ENCODE measurements at regions of chr1 and their contacts with region 1.

Region 1: DNA sequence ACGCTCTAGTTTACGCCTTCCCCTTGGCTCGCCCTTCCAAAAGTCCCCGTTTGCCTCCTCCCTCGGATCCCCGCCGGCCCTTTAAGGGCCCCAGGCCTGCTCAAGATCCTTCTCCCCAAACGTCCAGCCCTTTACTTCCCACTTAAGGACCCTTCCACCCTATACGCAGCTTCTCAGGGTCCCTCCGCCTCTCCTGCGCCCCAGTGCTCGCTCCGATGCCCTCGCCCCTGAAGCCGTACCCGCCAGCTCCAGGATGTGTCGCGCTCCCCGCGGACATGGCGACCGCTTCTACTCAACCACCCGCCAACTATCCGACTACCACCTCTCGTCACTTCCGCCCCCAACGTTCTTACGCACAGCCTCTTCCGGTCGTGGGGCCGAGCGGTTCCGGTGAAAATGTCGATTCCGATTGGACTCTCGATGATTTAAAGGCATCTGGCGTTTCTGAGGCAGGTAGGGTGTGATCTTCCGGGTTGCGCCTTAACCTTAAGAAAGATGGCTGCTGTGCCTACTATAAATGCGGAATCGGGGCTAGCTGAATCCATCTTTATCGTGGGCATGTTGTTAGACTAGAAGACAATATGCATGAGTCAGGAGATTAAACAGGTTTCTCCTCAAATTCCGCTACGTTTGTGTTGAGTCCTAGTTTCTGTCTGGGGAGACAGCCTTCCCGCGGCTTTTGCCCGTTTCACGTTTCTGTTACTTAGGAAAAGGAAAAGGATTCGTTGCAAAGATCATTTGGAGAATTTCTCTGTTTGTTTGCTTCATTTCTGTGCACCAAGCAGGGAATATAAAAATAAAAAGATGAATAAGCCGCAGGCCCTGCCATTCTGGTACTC is at the start of gene KHDC4:
- DNase-seq: peak; percentile 99
- ATAC-seq: peak; percentile 92
- H3K4me3 ChIP-seq: peak within 1 kb of the TSS; percentile 99
- H3K27ac ChIP-seq: peak within 1 kb of the TSS; percentile 87
- H3K4me1 ChIP-seq: peaks cover 13% of the 10 kb centered on the region
- H3K27me3 ChIP-seq: no peaks in the 10 kb centered on the region
- CTCF ChIP-seq: 0 out of 6 replicates have a peak, but pooled peaks of 1 of the 3 experiments have one; percentile 15
- EP300 ChIP-seq: no peak
- POLR2A ChIP-seq: peak; percentile 100
- RAD21 ChIP-seq: 0 out of 2 replicates have a peak, but pooled peaks have one; percentile 8
- polyA plus RNA-seq, gene KHDC4: 11.7 to 15.1 TPM

Region 2: DNA sequence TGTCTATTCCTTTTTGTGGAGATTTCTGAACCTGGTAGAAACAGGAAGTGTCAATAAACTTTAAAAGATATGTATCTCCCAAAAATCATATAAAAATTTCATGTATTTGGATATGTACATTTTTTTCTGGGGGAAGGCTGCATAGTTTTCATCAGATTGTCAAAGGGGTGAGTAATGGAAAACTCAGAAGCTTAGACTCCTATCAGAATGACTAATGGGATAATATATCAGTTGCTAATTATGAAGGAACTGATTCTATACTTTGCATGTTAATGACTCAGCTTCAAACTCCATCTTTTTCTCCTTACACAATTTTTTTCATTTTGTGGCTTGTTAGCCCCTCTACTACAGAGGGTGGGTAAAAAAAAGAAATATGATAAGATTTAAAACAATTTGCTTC is 133.2 kb before region 1 on chr1:
- CTCF ChIA-PET with region 1: no interaction called
- POLR2A ChIA-PET with region 1: no interaction called
- RAD21 ChIA-PET with region 1: no interaction called
- SMC1A ChIA-PET with region 1: no interaction called
- in situ Hi-C with region 1: no loop called
- intact Hi-C with region 1: no loop called
- DNase-seq: no peak
- ATAC-seq: no peak
- H3K4me3 ChIP-seq: no peak overlapping the region
- H3K27ac ChIP-seq: no peak overlapping the region
- H3K4me1 ChIP-seq: no peaks in the 10 kb centered on the region
- H3K27me3 ChIP-seq: no peaks in the 10 kb centered on the region
- CTCF ChIP-seq: no peak
- EP300 ChIP-seq: no peak
- POLR2A ChIP-seq: no peak
- RAD21 ChIP-seq: no peak

Region 3: DNA sequence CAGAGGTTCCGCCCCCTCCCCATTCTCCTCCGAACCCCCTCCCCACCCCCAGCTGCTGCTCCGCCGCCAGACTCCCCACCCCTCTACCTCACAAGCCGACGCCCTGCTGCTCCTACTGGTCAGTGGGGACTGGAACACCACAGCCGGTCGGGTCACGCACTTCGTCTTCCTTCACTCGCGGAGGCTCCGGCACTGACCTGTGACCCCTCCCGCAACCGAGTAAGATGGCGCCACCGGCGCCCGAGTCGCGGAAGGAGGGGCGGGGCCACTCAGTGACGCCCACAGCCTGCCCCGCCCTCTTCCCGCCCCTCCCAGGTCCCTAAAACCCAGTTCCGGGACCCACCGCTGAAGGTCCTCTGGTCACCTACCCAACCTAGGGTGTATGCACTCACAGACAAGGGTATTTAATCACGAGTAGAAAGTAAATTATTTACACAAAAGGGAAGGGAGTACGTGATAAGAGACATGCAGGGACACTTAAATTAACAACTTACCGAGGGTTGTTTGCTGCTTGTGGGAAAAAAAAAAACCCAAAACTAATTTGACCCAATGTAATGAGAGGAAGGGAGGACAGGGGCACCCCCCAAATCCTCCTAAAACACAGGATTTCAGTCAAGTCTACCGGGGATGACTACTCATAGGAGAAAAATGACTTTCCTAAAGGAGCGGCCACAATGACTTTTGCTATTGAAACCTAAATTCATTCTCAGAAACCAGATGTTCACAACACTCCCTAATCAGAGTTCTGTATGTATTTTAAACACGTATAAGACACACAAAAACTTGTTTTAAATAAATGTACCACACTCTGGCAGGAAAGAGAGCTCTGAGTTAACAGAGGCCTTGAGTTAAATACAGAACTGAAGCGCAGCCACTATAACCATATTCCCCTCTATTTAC is 22.9 kb before region 1 on chr1 and contains the start of gene RIT1:
- CTCF ChIA-PET with region 1: interaction called, 5 read pairs
- POLR2A ChIA-PET with region 1: interaction called, 11 read pairs
- RAD21 ChIA-PET with region 1: interaction called, 4 read pairs
- SMC1A ChIA-PET with region 1: interaction called, 22 read pairs
- in situ Hi-C with region 1: no loop called
- intact Hi-C with region 1: no loop called
- DNase-seq: peak; percentile 69
- ATAC-seq: peak; percentile 97
- H3K4me3 ChIP-seq: peak within 1 kb of the TSS; percentile 78
- H3K27ac ChIP-seq: peak within 1 kb of the TSS; percentile 59
- H3K4me1 ChIP-seq: peaks cover 3% of the 10 kb centered on the region; the same call in 1 of the 2 replicates
- H3K27me3 ChIP-seq: no peaks in the 10 kb centered on the region
- CTCF ChIP-seq: no peak
- EP300 ChIP-seq: peak in 1 of 2 experiments; percentile 49; a peak in 2 of 4 replicates
- POLR2A ChIP-seq: peak; percentile 96
- RAD21 ChIP-seq: 0 out of 2 replicates have a peak, but pooled peaks have one; percentile 5
- polyA plus RNA-seq, gene RIT1: 25.2 to 30.3 TPM

Region 4: GRCh38 chr1:155970531-155971167 is 36.3 kb after region 1 on chr1:
- CTCF ChIA-PET with region 1: interaction called, 227 read pairs
- POLR2A ChIA-PET with region 1: interaction called, 273 read pairs
- RAD21 ChIA-PET with region 1: interaction called, 214 read pairs
- SMC1A ChIA-PET with region 1: interaction called, 229 read pairs
- in situ Hi-C with region 1: no loop called
- intact Hi-C with region 1: no loop called
- DNase-seq: no peak
- ATAC-seq: peak; percentile 90
- H3K4me3 ChIP-seq: peak overlapping the region; percentile 70
- H3K27ac ChIP-seq: peak overlapping the region; percentile 23
- H3K4me1 ChIP-seq: peaks cover 57% of the 10 kb centered on the region
- H3K27me3 ChIP-seq: no peaks in the 10 kb centered on the region
- CTCF ChIP-seq: no peak
- EP300 ChIP-seq: peak in 1 of 2 experiments; percentile 46; a peak in 1 of 4 replicates
- POLR2A ChIP-seq: 0 out of 2 replicates have a peak, but pooled peaks have one; percentile 34
- RAD21 ChIP-seq: no peak

Region 5: DNA sequence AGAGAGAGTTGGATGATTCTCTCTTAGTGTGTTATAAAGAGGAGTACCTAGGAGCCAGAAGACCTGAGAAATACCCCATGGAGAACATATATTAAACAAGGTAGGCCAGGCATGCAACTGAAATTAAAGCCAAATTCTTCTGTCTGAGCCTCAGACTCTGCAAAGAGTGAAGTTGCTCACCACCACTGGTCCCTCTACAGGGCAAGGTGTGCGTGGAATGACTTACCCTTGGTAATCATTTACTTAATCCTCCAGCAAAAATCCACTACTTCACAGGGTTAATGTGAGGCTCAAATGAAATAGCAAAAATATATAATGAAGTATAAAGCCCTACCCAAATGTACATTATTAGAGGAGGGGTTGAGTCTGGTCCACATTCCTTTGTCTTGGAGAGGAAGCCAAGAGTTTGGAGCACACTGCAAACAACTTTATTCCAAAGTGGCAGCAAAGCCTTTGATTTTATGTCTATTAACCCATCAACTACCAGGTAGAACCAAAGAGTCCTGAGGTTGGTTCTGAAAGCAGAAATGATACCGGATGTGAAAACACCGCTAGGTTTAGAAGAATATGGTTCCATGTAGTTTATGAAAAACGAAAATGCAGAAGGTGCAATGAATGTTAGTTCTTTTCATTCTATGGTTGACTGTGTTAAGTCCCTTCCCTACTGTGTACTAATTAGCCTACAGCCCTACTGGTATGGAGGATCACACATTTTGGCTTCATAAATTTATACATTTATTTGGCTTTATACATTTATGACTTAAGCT is 77.9 kb after region 1 on chr1:
- CTCF ChIA-PET with region 1: interaction called, 11 read pairs
- POLR2A ChIA-PET with region 1: no interaction called
- RAD21 ChIA-PET with region 1: interaction called, 6 read pairs
- SMC1A ChIA-PET with region 1: interaction called, 6 read pairs
- in situ Hi-C with region 1: no loop called
- intact Hi-C with region 1: loop called (anchors 2 kb)
- DNase-seq: peak; percentile 70
- ATAC-seq: peak; percentile 96
- H3K4me3 ChIP-seq: no peak overlapping the region
- H3K27ac ChIP-seq: peak overlapping the region; percentile 53; the same call in 1 of the 2 replicates
- H3K4me1 ChIP-seq: peaks cover 31% of the 10 kb centered on the region
- H3K27me3 ChIP-seq: no peaks in the 10 kb centered on the region
- CTCF ChIP-seq: no peak
- EP300 ChIP-seq: peak; percentile 47 to 63; a peak in 2 of 4 replicates
- POLR2A ChIP-seq: no peak
- RAD21 ChIP-seq: no peak

Region 6: GRCh38 chr1:156060937-156061636 is 126.8 kb after region 1 on chr1 and contains the start of gene RAB25:
- CTCF ChIA-PET with region 1: interaction called, 102 read pairs
- POLR2A ChIA-PET with region 1: interaction called, 10 read pairs
- RAD21 ChIA-PET with region 1: interaction called, 68 read pairs
- SMC1A ChIA-PET with region 1: interaction called, 69 read pairs
- in situ Hi-C with region 1: loop called (anchors 5 kb)
- intact Hi-C with region 1: loop called (anchors 2 kb)
- DNase-seq: no peak
- ATAC-seq: no peak
- H3K4me3 ChIP-seq: no peak within 1 kb of the TSS
- H3K27ac ChIP-seq: no peak within 1 kb of the TSS
- H3K4me1 ChIP-seq: no peaks in the 10 kb centered on the region
- H3K27me3 ChIP-seq: no peaks in the 10 kb centered on the region
- CTCF ChIP-seq: no peak
- EP300 ChIP-seq: no peak
- POLR2A ChIP-seq: no peak
- RAD21 ChIP-seq: no peak
- polyA plus RNA-seq, gene RAB25: not detected

Region 7: DNA sequence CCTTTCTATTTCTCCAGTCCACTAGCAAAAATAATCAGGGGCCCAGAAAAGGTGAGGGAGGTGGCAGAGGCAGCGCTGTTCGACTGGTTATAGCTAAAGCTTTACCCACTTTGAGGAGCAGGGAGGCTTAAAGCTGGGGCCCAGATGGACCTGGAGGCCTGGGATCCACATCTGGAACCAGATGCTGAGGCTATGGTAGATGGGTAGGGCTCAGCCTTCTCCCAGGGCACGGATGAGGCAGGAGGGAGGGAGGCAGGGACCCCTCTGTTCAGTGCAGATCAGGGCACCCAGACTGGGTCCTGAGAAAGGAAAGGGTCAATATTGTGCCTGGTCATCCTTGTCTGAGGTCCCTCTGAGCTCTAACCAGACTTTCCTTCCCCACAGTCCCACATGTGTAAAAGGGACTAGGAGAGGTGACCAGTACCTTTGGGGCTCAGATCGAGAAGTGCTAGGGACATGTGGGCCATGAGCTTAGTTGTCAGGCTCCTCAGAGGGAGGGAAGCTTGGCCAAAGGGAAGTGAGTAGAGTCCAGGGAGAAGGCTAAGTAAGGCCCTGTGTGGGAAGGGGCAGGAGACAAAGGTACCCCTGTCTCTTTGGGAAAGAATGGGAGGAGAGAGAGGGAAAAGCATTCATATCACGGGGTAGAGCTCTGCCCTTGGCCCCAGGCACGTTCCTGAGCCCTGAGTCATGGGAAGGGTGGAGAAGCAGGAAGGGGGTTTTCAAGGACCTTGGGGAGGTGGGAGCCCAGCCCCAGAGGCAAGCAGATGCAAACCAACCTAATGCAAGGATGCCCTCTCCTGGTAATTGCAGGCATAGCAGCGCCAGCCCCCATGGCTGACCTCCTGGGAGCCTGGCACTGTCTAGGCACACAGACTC is 195.6 kb after region 1 on chr1:
- CTCF ChIA-PET with region 1: interaction called, 10 read pairs
- POLR2A ChIA-PET with region 1: no interaction called
- RAD21 ChIA-PET with region 1: interaction called, 4 read pairs
- SMC1A ChIA-PET with region 1: interaction called, 12 read pairs
- in situ Hi-C with region 1: no loop called
- intact Hi-C with region 1: no loop called
- DNase-seq: no peak
- ATAC-seq: peak; percentile 29
- H3K4me3 ChIP-seq: no peak overlapping the region
- H3K27ac ChIP-seq: peak overlapping the region; percentile 56
- H3K4me1 ChIP-seq: peaks cover 47% of the 10 kb centered on the region
- H3K27me3 ChIP-seq: no peaks in the 10 kb centered on the region
- CTCF ChIP-seq: peak; percentile 90 to 97 (median 96)
- EP300 ChIP-seq: no peak
- POLR2A ChIP-seq: no peak
- RAD21 ChIP-seq: peak; percentile 96

Region 8: DNA sequence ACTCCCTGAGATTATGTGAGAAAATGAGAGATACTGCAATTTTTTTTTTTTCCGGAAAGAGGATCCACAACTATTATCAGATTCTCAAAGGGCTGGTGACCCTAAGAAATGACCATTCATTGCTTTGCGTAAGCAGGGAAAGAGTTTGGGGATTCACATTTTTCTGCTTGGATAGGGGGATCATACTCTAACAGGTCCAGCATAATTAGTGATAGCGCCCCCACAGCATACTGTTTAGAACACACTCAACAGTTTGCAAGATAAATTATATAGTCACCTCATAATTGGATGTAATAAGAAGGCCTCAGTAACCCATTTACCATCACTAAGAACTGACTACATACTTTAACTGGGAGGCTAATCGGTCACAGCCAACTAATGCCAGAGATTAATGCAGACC is 401.9 kb after region 1 on chr1:
- CTCF ChIA-PET with region 1: no interaction called
- POLR2A ChIA-PET with region 1: no interaction called
- RAD21 ChIA-PET with region 1: no interaction called
- SMC1A ChIA-PET with region 1: no interaction called
- in situ Hi-C with region 1: no loop called
- intact Hi-C with region 1: no loop called
- DNase-seq: no peak
- ATAC-seq: 0 out of 3 replicates have a peak, but pooled peaks have one; percentile 11
- H3K4me3 ChIP-seq: peak overlapping the region; percentile 96
- H3K27ac ChIP-seq: no peak overlapping the region
- H3K4me1 ChIP-seq: no peaks in the 10 kb centered on the region
- H3K27me3 ChIP-seq: no peaks in the 10 kb centered on the region
- CTCF ChIP-seq: peak; percentile 27 to 57 (median 45); a peak in 5 of 6 replicates
- EP300 ChIP-seq: no peak
- POLR2A ChIP-seq: no peak
- RAD21 ChIP-seq: no peak

Measured in GM12878 (cell line).